Common myeloid progenitor, CD34-positive (primary cell): ENCODE measurements at regions of chr22 and their contacts with region 1.

Region 1: DNA sequence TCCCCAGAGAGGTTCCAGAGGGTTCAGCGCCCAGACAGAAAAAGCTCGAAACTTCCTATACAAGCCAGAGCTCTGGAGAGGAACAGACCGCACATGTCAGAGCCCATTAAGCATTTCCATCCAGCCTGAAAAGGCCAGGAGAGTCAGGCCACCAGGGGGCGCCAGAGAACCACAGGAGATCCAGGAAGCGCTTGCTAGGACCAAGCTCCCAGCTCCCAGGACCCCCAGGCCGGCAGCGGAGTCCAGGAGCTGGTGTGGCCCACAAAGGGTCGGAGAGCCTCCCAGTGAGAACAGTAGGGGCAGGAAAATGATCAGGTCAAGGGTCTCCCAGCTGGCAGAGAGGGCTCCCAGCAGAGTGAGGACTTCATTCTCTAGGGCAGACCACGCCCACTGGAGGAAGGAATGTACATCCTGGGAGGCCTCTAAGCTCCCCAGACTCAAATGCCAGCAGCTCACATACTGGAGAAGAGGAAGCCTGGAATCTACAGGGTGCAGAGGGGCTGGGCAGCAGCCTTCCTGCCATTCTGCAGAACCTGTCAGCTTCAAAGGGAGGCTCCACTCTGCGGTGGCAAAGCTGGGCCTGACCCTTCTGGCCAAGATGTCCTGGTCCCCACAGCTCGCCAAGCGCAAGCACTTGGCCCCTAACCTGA is 2.1 kb upstream of the MEI1 start:
- DNase-seq: peak; percentile 87 to 91 (median 88)
- H3K4me3 ChIP-seq: peak overlapping the region in 5 of 7 experiments; percentile 13 to 75 (median 52)
- H3K27ac ChIP-seq: no peak overlapping the region
- H3K4me1 ChIP-seq: peaks cover 0 to 20% (median 17%) of the 10 kb centered on the region in 4 experiments
- H3K27me3 ChIP-seq: no peaks in the 10 kb centered on the region

Region 2: GRCh38 chr22:41589391-41590241 is 107.6 kb before region 1 on chr22 and contains the start of gene PMM1:
- CTCF ChIA-PET with region 1: no interaction called
- POLR2A ChIA-PET with region 1: no interaction called
- DNase-seq: peak; percentile 99 to 100 (median 100)
- H3K4me3 ChIP-seq: peak within 1 kb of the TSS; percentile 50 to 88 (median 73)
- H3K27ac ChIP-seq: peak within 1 kb of the TSS in 1 of 2 experiments; percentile 25
- H3K4me1 ChIP-seq: peaks cover 0 to 13% (median 10%) of the 10 kb centered on the region in 4 experiments
- H3K27me3 ChIP-seq: peaks cover 0 to 12% (median 4%) of the 10 kb centered on the region in 5 experiments

Region 3: DNA sequence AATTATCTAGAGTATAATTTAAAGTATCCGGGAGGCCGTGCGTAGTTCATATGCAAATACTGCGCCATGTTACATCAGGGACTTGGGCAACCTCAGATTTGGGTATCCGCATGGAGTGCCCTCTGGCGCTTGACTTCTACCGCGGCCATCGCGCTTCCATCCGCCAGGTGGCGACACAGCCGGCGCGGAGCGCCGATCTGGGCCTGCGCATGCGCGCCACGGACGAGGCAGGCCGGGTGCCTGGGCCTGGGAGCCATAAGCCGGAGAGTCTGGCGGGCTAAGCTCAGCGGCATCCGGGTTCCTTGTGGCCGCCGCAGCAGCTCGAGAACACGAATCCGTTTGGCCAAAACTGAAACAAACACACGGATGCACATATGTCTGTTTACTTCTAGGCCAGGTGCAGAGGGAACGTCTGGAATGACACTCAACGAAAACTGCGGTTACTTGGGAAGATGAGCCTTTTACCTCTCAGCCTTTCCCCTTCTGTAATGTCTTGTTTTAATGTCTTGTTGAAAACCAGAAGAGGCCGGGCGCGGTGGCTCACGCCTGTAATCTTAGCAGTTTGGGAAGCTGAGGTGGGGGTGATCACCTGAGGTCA is 30.5 kb before region 1 on chr22:
- CTCF ChIA-PET with region 1: interaction called, 18 read pairs
- POLR2A ChIA-PET with region 1: no interaction called
- DNase-seq: peak; percentile 89 to 95 (median 93)
- H3K4me3 ChIP-seq: peak overlapping the region in 4 of 7 experiments; percentile 32 to 73 (median 44)
- H3K27ac ChIP-seq: peak overlapping the region in 1 of 2 experiments; percentile 68
- H3K4me1 ChIP-seq: peaks cover 0 to 9% (median 7%) of the 10 kb centered on the region in 4 experiments
- H3K27me3 ChIP-seq: no peaks in the 10 kb centered on the region

Region 4: DNA sequence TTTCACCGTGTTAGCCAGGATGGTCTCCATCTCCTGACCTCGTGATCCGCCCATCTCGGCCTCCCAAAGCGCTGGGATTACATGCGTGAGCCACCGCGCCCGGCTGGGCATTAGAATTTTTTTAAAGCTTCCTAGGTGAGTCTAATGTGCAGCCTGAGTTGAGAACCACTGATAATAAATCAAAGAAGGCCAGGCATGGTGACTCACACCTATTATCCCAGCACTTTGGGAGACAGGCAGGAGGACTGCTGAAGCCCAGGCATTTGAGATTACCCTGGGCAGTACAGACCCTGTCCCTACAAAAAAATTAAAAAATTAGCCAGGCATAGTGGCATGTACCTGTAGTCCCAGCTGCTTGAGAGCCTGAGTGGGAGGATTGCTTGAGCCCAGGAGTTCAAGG is 15.8 kb after region 1 on chr22:
- CTCF ChIA-PET with region 1: interaction called, 14 read pairs
- POLR2A ChIA-PET with region 1: no interaction called
- DNase-seq: no peak
- H3K4me3 ChIP-seq: no peak overlapping the region
- H3K27ac ChIP-seq: no peak overlapping the region
- H3K4me1 ChIP-seq: no peaks in the 10 kb centered on the region
- H3K27me3 ChIP-seq: no peaks in the 10 kb centered on the region

Region 5: GRCh38 chr22:41746567-41747400 is 49.5 kb after region 1 on chr22:
- CTCF ChIA-PET with region 1: interaction called, 18 read pairs
- POLR2A ChIA-PET with region 1: no interaction called
- DNase-seq: peak; percentile 58 to 69 (median 65)
- H3K4me3 ChIP-seq: no peak overlapping the region
- H3K27ac ChIP-seq: no peak overlapping the region
- H3K4me1 ChIP-seq: peaks cover 0 to 3% (median under 1%) of the 10 kb centered on the region in 4 experiments
- H3K27me3 ChIP-seq: peaks cover 0 to 2% (median 0%) of the 10 kb centered on the region in 5 experiments

Region 6: GRCh38 chr22:41800348-41801146 is 103.3 kb after region 1 on chr22 and contains the start of gene CCDC134:
- CTCF ChIA-PET with region 1: interaction called, 18 read pairs
- POLR2A ChIA-PET with region 1: interaction called, 4 read pairs
- DNase-seq: peak; percentile 92 to 98 (median 98)
- H3K4me3 ChIP-seq: peak within 1 kb of the TSS; percentile 73 to 98 (median 90)
- H3K27ac ChIP-seq: peak within 1 kb of the TSS; percentile 78 to 90
- H3K4me1 ChIP-seq: peaks cover 3 to 32% (median 26%) of the 10 kb centered on the region in 4 experiments
- H3K27me3 ChIP-seq: no peaks in the 10 kb centered on the region

Region 7: GRCh38 chr22:41870786-41871185 is 173.5 kb after region 1 on chr22:
- CTCF ChIA-PET with region 1: interaction called, 10 read pairs
- POLR2A ChIA-PET with region 1: no interaction called
- DNase-seq: no peak
- H3K4me3 ChIP-seq: no peak overlapping the region
- H3K27ac ChIP-seq: no peak overlapping the region
- H3K4me1 ChIP-seq: no peaks in the 10 kb centered on the region
- H3K27me3 ChIP-seq: no peaks in the 10 kb centered on the region

Region 8: GRCh38 chr22:41940832-41941765 is 243.8 kb after region 1 on chr22:
- CTCF ChIA-PET with region 1: interaction called, 34 read pairs
- POLR2A ChIA-PET with region 1: interaction called, 4 read pairs
- DNase-seq: peak; percentile 79 to 89 (median 87)
- H3K4me3 ChIP-seq: peak overlapping the region in 1 of 7 experiments; percentile 30
- H3K27ac ChIP-seq: peak overlapping the region in 1 of 2 experiments; percentile 54
- H3K4me1 ChIP-seq: peaks cover 0 to 22% (median 14%) of the 10 kb centered on the region in 4 experiments
- H3K27me3 ChIP-seq: no peaks in the 10 kb centered on the region